ENCODE measurements at regions of chr4 and their contacts with region 1.

Region 1: DNA sequence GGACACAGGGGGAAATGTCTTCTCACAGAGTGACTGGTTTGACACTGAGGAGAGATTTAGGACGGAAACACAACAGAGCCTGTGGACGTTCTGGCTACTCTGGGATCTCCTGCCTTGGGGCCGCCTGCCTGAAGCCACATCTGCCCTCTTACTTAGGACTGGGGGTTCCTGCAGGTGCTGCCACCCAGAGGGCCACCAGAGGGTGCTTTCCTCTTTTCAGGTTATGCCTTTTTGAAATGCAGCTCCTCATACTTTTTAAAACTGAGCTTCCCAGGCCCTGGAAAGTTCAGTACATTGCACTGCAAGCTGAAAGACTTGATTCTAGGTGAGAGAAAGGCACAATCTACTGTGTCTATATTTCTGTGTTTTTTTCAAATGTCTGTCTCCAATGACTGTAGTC is 92.2 kb upstream of the PGRMC2 start:
- DNase-seq: peak; percentile 40
- ATAC-seq: peak; percentile 57 to 62

Region 2: GRCh38 chr4:128542041-128542440 is 162.2 kb after region 1 on chr4:
- intact Hi-C with region 1: loop called in 1 of 2 experiments (anchors 10 kb)
- DNase-seq: no peak
- ATAC-seq: no peak

Measured in left cardiac atrium (tissue), 4 donors.